ENCODE measurements at regions of chr2 and their contacts with region 1.

Region 1: DNA sequence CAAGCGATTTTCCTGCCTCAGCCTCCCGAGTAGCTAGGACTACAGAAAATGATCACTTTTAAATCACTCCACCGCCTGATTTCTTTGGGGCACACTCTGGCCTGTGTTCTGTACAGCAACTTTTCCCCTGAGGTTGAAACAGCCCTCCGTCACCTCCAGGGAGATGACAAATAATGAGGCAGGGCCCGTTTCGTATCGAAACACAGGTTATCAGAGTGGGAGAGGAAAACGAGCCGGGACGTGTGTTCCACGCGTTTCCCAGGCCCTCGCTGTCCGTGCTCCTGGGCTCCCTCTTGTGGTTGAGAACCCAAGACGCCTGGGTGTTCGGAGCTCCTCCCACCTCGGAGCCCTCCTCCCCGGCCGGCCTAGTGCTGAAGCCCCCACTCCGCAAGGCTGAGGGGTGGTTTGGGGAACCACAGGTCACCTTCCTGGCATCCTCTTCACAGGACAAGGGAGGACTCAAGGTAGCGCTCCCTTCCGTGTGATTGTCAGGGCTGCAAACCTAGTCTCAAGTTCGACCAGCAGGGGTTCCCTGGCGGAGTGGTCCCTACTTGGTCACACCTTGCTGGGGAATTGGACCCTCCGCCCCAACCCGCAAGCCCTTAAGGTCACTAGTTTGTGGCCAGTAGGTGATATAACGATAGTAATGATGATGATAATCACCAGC is 12.8 kb downstream of the ATP6V1B1 start:
- DNase-seq: peak; percentile 89
- ATAC-seq: peak; percentile 94
- H3K4me3 Mint-ChIP-seq: peak overlapping the region; percentile 64
- H3K27ac Mint-ChIP-seq: peak overlapping the region; percentile 20
- H3K4me1 Mint-ChIP-seq: peaks cover 17% of the 10 kb centered on the region
- H3K27me3 Mint-ChIP-seq: peaks cover 13% of the 10 kb centered on the region

Region 2: DNA sequence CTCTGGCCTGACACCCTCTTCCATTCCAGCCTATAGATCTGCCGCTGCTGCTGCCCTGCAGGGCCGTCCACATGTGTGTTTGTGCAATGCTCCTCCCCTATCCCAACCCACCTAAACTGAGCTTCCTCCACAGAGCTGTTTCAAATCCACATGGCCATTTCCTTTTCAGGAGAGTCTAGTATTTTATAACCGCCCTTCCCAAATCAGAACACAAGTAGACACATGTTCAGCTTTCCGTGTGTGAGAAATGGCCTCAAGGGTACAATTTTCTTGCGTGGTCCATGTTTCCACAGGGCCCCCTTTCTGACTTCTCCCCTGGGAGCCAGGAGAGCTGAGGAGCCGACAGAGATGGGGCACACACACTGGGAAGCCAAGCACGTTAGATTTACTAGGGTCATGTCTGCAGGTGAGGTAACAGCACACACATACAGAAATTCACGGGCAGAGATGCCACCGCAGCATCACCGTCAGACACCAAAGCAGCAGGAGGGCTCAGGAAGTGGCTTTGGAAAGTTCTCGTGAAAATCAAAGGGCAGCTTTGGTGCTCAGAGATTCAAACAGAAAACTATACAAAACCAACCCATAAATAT is 292.0 kb before region 1 on chr2:
- CTCF ChIA-PET with region 1: interaction called, 5 read pairs
- POLR2A ChIA-PET with region 1: no interaction called
- intact Hi-C with region 1: loop called (anchors 1 to 10 kb)
- DNase-seq: peak; percentile 57
- ATAC-seq: peak; percentile 61
- H3K4me3 Mint-ChIP-seq: no peak overlapping the region
- H3K27ac Mint-ChIP-seq: peak overlapping the region; percentile 29
- H3K4me1 Mint-ChIP-seq: peaks cover 32% of the 10 kb centered on the region
- H3K27me3 Mint-ChIP-seq: no peaks in the 10 kb centered on the region

Region 3: GRCh38 chr2:70789304-70790135 is 158.9 kb before region 1 on chr2:
- CTCF ChIA-PET with region 1: interaction called, 19 read pairs
- POLR2A ChIA-PET with region 1: no interaction called
- intact Hi-C with region 1: loop called (anchors 1 kb)
- DNase-seq: peak; percentile 88
- ATAC-seq: peak; percentile 84
- H3K4me3 Mint-ChIP-seq: peak overlapping the region; percentile 56
- H3K27ac Mint-ChIP-seq: peak overlapping the region; percentile 27
- H3K4me1 Mint-ChIP-seq: peaks cover 11% of the 10 kb centered on the region
- H3K27me3 Mint-ChIP-seq: peaks cover 50% of the 10 kb centered on the region

Region 4: DNA sequence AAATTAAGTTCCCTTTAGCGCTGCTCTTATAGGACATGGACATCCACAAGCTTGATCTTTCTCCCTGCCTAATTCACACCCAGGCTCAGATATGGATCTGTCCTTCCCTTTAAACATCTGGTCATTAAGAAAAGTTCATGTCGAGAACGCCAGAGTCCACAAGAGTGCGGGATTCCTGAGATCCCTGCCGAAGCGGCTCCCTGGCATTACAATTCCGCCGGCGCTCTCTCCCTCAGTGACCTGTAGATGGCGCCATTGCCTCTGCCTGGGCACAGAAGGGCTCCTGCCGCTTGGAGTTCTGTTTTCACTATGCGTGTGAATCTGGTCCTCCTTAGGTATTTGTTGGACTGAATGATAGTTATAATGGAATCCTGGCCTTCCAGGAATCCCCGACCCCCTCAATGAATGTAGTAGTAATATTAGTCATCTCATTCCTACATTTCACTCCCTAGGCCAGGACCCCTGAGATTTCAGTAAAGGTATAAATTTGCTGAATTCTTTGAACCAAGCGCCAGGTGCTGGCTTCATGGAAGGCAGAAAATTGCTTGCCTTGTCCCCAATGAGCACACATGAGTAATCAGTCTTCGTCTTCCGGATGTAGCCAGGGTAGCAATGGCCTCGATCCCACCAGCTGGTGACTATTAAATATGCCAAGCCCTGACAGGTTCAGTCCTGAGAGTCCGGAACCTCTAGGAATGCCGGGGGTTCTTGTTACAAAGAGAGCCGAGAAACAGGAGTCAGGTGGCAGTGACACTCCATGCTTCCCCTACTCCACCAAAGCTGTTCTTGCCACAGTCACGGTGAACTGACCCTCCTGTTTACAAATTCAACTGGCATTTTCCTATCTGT is 86.5 kb before region 1 on chr2:
- CTCF ChIA-PET with region 1: interaction called, 75 read pairs
- POLR2A ChIA-PET with region 1: no interaction called
- intact Hi-C with region 1: loop called (anchors 1 to 2 kb)
- DNase-seq: peak; percentile 86
- ATAC-seq: peak; percentile 89
- H3K4me3 Mint-ChIP-seq: no peak overlapping the region
- H3K27ac Mint-ChIP-seq: no peak overlapping the region
- H3K4me1 Mint-ChIP-seq: peaks cover 2% of the 10 kb centered on the region
- H3K27me3 Mint-ChIP-seq: peaks cover 33% of the 10 kb centered on the region

Region 5: GRCh38 chr2:70919672-70920366 is 28.7 kb before region 1 on chr2:
- CTCF ChIA-PET with region 1: interaction called, 9 read pairs
- POLR2A ChIA-PET with region 1: no interaction called
- intact Hi-C with region 1: loop called in 1 of 2 experiments (anchors 2 kb)
- DNase-seq: peak; percentile 86
- ATAC-seq: peak; percentile 74
- H3K4me3 Mint-ChIP-seq: no peak overlapping the region
- H3K27ac Mint-ChIP-seq: no peak overlapping the region
- H3K4me1 Mint-ChIP-seq: no peaks in the 10 kb centered on the region
- H3K27me3 Mint-ChIP-seq: peaks cover 14% of the 10 kb centered on the region

Region 6: GRCh38 chr2:70935468-70936164 is 12.9 kb before region 1 on chr2 and contains the start of gene ATP6V1B1:
- CTCF ChIA-PET with region 1: interaction called, 26 read pairs
- POLR2A ChIA-PET with region 1: no interaction called
- intact Hi-C with region 1: no loop called
- DNase-seq: no peak
- ATAC-seq: no peak
- H3K4me3 Mint-ChIP-seq: no peak within 1 kb of the TSS
- H3K27ac Mint-ChIP-seq: no peak within 1 kb of the TSS
- H3K4me1 Mint-ChIP-seq: no peaks in the 10 kb centered on the region
- H3K27me3 Mint-ChIP-seq: peaks cover 11% of the 10 kb centered on the region
- total RNA-seq, gene ATP6V1B1: not detected

Region 7: DNA sequence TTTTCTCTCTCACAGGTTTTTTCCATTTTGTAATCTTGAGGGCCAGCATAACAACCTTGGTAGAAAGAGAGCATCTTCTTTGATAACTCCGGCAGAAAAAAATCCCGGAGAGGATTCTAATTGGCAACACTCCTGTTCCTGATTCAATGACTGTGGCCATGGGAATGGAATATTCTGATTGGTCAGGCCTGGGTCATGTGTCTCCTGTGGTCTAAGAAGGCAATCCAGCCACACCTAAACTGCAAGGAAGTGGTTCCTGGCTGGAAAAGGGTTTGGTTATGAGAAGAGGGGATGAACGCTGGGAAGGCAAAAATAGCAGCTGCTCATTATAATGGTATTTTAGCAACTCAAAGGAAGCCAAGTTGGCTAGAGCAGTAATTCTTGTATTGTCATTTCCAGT is 358.3 kb after region 1 on chr2:
- CTCF ChIA-PET with region 1: no interaction called
- POLR2A ChIA-PET with region 1: no interaction called
- intact Hi-C with region 1: no loop called
- DNase-seq: no peak
- ATAC-seq: no peak
- H3K4me3 Mint-ChIP-seq: no peak overlapping the region
- H3K27ac Mint-ChIP-seq: no peak overlapping the region
- H3K4me1 Mint-ChIP-seq: no peaks in the 10 kb centered on the region
- H3K27me3 Mint-ChIP-seq: peaks cover 2% of the 10 kb centered on the region